Cardiac septum (tissue), 1 donor: ENCODE measurements at regions of chr12 and their contacts with region 1.

Region 1: GRCh38 chr12:69900720-69901131 is 75.7 kb downstream of the MYRFL start:
- DNase-seq: no peak

Region 2: DNA sequence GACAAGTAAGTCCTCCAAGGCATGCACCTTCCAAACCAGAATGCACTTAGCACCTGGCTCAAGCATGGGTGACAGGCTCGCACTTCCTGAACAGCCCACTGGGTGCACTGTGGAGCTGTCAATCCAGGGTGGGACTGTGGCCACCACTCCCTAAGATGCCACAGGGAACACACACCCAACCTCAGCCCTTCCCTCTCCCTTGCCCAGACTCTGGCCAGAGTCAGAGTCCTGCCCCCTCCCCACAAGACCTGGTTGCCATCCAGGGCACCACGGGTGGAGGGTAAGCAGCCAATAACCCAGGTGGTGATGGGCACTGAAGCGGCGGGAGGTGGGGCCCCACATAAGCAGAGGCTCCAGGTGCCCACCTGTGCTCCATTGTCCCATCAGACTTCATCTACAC is 84.9 kb after region 1 on chr12:
- intact Hi-C with region 1: loop called (anchors 10 kb)
- DNase-seq: no peak

Region 3: DNA sequence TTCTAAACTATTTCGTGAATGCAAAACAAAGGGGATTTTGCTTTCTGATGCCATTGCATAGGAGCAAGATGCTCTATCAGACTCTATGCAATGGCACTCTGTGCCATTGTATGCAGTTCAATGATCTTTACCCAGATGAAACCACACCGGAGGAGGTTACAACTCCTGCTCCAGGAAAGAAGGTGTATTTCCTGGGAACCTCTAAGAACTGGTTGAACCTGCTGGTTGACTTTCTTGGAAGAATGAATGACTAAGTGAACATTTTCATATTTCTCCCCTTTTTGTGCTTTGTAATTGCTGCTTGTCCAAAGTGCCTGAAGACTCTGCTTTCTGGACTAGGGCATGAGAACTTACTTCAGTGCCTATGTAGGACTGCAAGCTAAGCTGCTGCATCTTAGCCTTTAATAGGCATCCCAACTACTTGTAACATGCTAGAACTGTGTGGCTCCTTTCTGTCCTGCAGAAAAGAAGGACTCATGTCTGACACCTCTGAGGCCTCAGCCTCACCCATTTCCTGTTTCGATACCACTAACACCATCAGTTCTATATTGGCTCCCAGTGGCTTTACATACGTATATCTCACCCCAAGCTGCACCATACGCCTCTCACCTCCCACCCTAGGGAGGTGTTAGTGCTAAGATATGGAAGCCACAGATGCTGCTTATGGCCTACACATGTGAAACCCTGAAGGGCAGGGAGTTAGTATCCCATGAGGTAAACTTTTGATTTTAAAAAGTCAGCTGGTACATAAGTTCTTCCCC is 149.1 kb after region 1 on chr12:
- intact Hi-C with region 1: loop called (anchors 10 kb)
- DNase-seq: no peak

Region 4: GRCh38 chr12:70242695-70243509 is 342.2 kb after region 1 on chr12 and contains the start of gene CNOT2:
- intact Hi-C with region 1: loop called (anchors 10 kb)
- DNase-seq: peak; percentile 93
- total RNA-seq, gene CNOT2: 44.0 TPM

Region 5: DNA sequence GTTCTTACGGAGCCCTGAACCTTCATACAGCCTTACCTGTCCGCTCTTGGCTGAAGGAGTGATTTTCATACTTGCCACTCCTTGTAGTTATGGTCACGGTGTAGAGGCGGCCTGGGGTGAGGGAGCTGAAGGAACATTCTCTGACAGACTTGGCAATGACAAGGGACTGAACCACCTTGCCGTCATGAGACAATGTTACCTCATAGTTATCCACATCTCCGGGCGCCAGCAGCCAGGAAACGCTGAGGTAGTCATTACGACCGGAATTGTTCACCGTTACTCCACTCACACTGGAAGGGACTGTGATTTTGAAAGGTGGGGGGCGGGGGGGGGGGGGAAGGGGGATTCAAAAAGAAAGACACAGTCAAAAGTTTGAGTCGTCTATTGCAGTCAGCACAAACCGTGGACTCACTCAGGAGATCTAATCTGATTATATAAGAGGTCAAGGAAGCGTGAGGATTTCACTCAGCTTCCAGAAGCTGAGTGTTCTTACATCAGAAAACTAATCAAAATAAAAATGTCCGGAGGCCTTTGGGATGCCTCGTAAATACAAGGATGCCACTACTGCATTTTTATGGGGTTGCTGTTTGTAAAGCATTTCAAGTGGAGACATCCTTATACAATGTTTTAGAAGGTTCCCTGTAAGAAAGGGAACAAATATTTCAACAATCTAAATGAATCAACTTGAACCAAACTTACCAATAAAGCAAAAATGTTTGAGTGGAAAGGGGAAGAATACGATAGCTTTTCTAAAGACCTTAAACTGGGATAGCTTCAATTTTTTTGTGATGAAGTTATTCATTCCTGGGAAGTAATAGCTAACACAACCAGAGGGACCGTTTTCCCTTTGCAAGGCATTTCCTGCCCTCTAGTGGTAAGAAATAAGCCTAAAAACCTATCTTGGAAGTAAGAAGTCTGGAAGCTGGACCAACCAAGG is 675.9 kb after region 1 on chr12:
- intact Hi-C with region 1: loop called (anchors 2 kb)
- DNase-seq: no peak